ENCODE measurements at regions of chr10 and their contacts with region 1.

Region 1: GRCh38 chr10:26334932-26335573 is 103.1 kb upstream of the APBB1IP start:
- DNase-seq: no peak
- H3K4me3 ChIP-seq: no peak overlapping the region
- H3K27ac ChIP-seq: no peak overlapping the region
- H3K4me1 ChIP-seq: peaks cover 7% of the 10 kb centered on the region
- H3K27me3 ChIP-seq: no peaks in the 10 kb centered on the region
- CTCF ChIP-seq: peak; percentile 15 to 69 (median 58)
- POLR2A ChIP-seq: no peak

Region 2: DNA sequence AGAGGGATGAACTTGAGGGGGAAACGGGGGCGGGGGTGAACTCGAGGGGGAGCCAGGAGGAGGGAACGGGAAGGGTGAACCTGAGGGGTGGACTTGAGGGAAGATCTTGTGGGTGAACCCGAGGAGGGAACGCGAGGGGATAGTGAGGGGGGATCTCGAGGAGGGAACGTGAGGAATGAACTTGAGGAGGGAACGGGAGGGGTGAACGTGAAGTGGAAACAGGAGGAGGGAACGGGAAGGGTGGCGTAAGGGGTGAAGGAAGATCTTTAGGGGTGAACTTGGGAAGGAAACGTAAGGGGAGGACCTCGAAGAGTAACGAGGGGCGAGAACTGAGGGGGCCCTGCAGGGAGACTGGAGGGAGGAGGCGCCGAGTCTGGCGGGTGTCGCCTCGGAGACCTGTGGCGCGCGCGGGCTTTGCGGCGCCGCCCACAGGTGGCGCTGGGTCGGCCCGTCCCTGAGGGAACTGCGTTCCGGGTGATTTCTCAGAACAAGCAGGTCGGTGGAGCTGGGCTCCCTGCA is 400.4 kb before region 1 on chr10:
- intact Hi-C with region 1: no loop called
- DNase-seq: no peak
- H3K4me3 ChIP-seq: peak overlapping the region; percentile 39 to 44
- H3K27ac ChIP-seq: no peak overlapping the region
- H3K4me1 ChIP-seq: peaks cover 14% of the 10 kb centered on the region
- H3K27me3 ChIP-seq: no peaks in the 10 kb centered on the region
- CTCF ChIP-seq: peak in 1 of 3 experiments; percentile 28
- POLR2A ChIP-seq: no peak

Region 3: GRCh38 chr10:26556748-26557640 is 221.9 kb after region 1 on chr10:
- intact Hi-C with region 1: loop called (anchors 10 kb)
- DNase-seq: no peak
- H3K4me3 ChIP-seq: no peak overlapping the region
- H3K27ac ChIP-seq: peak overlapping the region; percentile 61
- H3K4me1 ChIP-seq: peaks cover 14% of the 10 kb centered on the region
- H3K27me3 ChIP-seq: no peaks in the 10 kb centered on the region
- CTCF ChIP-seq: peak; percentile 28 to 75 (median 68)
- POLR2A ChIP-seq: no peak